ENCODE measurements at regions of chr2 and their contacts with region 1.

Region 1: DNA sequence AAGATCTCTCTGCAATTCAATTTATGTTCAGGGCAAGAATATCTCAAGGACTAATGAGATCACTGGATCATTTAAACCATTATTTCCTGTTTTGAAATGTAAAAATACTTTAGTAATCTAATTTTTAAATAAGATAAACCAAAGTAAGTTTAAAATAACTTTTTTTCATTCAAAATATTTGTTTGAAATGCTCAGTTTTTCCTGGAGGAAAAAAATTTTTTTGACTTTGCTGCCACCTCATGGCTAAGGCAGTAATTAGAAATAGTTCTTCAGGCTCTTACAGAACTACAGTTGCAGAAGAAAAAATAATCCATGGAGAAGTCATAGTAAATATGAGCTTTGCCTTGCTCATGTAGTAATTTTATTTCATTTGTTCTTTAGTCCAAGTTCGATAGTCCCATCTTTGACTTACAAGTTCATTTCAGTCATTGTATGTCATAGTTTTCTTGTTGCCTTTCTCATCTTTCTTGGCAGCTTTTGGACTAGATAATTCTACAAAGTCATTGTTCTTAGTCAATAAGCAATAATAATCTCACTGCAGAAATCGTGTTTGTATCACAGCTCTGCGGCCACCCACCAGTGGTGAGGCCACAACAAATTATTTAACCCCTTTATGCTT is 127.4 kb downstream of the DPP4 start:
- DNase-seq: no peak
- ATAC-seq: peak; percentile 22; the same call in 1 of the 2 replicates
- H3K4me3 Mint-ChIP-seq: no peak overlapping the region
- H3K27ac Mint-ChIP-seq: no peak overlapping the region
- H3K4me1 Mint-ChIP-seq: peaks cover 10% of the 10 kb centered on the region
- H3K27me3 Mint-ChIP-seq: no peaks in the 10 kb centered on the region
- CTCF ChIP-seq: no peak

Region 2: GRCh38 chr2:161586517-161587167 is 360.0 kb before region 1 on chr2:
- CTCF ChIA-PET with region 1: interaction called, 16 read pairs
- POLR2A ChIA-PET with region 1: no interaction called
- DNase-seq: no peak
- ATAC-seq: peak; percentile 75; the same call in 1 of the 2 replicates
- H3K4me3 Mint-ChIP-seq: no peak overlapping the region
- H3K27ac Mint-ChIP-seq: no peak overlapping the region
- H3K4me1 Mint-ChIP-seq: peaks cover 4% of the 10 kb centered on the region
- H3K27me3 Mint-ChIP-seq: no peaks in the 10 kb centered on the region
- CTCF ChIP-seq: peak; percentile 50; the same call in 1 of the 2 replicates

Region 3: DNA sequence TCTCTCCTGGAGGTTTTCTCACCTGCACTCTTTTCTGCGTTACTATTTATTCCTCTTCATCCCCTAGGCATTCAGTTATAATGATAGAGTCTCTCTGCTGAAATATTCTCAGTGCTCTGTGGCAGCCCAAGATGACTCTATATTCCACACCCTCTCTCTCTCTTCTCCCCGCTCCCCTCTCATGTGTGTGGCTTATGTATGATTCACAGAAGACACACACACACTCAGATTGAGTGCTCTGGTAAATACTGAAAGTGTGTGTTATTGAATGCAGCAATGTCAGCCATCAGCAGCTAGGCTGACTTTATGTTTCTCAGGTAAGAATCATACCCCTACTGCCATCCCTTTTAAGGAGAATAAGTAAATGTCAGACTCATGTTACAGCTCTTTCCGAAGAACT is 121.2 kb before region 1 on chr2:
- CTCF ChIA-PET with region 1: no interaction called
- POLR2A ChIA-PET with region 1: no interaction called
- DNase-seq: no peak
- ATAC-seq: no peak
- H3K4me3 Mint-ChIP-seq: no peak overlapping the region
- H3K27ac Mint-ChIP-seq: no peak overlapping the region
- H3K4me1 Mint-ChIP-seq: no peaks in the 10 kb centered on the region
- H3K27me3 Mint-ChIP-seq: no peaks in the 10 kb centered on the region
- CTCF ChIP-seq: no peak

Region 4: GRCh38 chr2:161965994-161966393 is 19.4 kb after region 1 on chr2:
- CTCF ChIA-PET with region 1: no interaction called
- POLR2A ChIA-PET with region 1: no interaction called
- DNase-seq: no peak
- ATAC-seq: no peak
- H3K4me3 Mint-ChIP-seq: no peak overlapping the region
- H3K27ac Mint-ChIP-seq: no peak overlapping the region
- H3K4me1 Mint-ChIP-seq: peaks cover 7% of the 10 kb centered on the region
- H3K27me3 Mint-ChIP-seq: no peaks in the 10 kb centered on the region
- CTCF ChIP-seq: no peak